ENCODE measurements at regions of chr1 and their contacts with region 1.

Region 1: GRCh38 chr1:39189592-39190041 is 14.9 kb upstream of the MACF1 start:
- DNase-seq: peak; percentile 68
- H3K4me3 ChIP-seq: no peak overlapping the region
- H3K27me3 ChIP-seq: no peaks in the 10 kb centered on the region
- CTCF ChIP-seq: no peak

Region 2: DNA sequence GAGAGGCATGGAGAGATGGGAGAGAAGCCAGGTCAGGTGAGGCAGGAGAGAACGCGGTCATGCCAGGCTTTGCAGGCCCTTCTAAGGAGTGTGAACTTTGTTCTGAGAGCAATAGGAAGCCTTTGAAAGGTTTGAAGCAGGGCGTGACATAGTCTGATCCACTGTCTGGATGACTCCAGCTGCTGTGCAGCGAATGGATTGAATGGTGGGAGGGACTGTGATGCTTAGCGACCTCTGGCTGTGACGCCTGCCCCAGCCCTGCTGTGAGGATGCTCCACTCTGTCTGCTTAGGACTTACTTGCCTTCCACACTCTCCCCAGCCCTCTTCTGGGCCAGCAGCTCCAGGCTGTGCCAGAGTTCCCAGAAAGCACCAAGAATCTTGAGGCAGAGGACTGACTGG is 1101.3 kb before region 1 on chr1:
- CTCF ChIA-PET with region 1: no interaction called
- POLR2A ChIA-PET with region 1: no interaction called
- DNase-seq: no peak
- H3K4me3 ChIP-seq: no peak overlapping the region
- H3K27me3 ChIP-seq: peaks cover 1% of the 10 kb centered on the region
- CTCF ChIP-seq: no peak

Region 3: GRCh38 chr1:39026051-39026865 is 163.4 kb before region 1 on chr1 and contains the start of gene NDUFS5:
- CTCF ChIA-PET with region 1: no interaction called
- POLR2A ChIA-PET with region 1: no interaction called
- DNase-seq: peak; percentile 60
- H3K4me3 ChIP-seq: peak within 1 kb of the TSS; percentile 59
- H3K27me3 ChIP-seq: no peaks in the 10 kb centered on the region
- CTCF ChIP-seq: no peak
- polyA plus RNA-seq, gene NDUFS5: 223 and 632 TPM in 2 replicates

Region 4: GRCh38 chr1:39127513-39127912 is 62.1 kb before region 1 on chr1:
- CTCF ChIA-PET with region 1: interaction called, 24 read pairs
- POLR2A ChIA-PET with region 1: no interaction called
- DNase-seq: no peak
- H3K4me3 ChIP-seq: no peak overlapping the region
- H3K27me3 ChIP-seq: no peaks in the 10 kb centered on the region
- CTCF ChIP-seq: no peak

Region 5: DNA sequence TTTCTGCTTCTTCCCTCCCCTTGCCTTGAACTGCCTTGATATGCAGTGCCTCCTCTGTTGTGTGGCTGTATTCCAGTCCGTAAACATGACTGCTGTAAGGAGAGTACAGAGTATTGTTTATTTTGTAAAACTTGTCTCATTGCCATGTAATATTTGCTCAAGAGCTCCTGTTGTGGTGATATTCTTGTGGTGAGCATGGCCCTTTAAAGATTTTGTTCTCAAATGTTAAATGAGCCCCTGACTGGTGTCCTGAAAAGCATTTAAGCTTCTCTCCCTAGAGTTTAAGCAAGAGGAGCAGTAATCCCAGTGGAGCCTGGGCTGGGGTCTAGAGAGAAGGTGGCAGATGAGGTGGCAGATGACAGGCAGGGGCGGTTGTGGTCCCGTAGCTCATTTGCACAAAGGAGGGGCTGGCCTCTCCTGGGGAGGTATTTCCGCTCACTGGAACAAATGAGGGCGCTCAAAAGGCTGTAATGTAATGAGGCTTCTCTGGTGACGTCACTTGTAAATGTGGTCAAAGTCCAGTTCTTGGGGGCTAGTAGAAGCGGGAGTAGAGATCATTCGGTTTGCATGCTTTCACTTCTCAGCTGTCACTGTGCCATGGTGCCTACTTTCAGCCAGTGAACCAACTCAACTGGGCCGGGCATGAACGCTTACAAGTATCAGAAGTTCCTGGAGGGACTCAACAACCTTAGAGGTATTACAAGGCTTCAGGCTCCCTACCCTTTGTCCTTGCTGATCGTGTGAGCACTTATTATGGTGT is 31.1 kb before region 1 on chr1:
- CTCF ChIA-PET with region 1: interaction called, 23 read pairs
- POLR2A ChIA-PET with region 1: no interaction called
- DNase-seq: no peak
- H3K4me3 ChIP-seq: no peak overlapping the region
- H3K27me3 ChIP-seq: no peaks in the 10 kb centered on the region
- CTCF ChIP-seq: no peak

Region 6: DNA sequence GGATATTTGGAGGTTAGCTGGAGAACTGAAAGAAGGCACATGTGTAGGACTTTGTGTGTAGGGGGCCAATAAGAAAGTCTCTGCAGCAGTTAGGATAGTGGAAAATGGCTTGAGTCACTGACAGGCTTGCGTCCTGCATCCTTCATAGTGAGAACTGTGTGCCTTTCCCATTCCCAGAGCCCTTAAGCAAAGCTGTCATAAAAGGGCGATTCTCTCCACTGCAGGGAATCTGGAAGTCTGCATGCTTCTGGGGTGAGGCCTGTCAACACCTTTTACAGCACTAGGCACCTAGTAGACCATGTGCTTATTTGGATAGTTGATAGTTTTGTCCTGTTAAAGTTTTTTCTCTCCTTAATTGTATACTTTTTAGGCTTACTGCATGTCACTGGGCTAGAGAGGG is 24.6 kb before region 1 on chr1:
- CTCF ChIA-PET with region 1: interaction called, 23 read pairs
- POLR2A ChIA-PET with region 1: interaction called, 5 read pairs
- DNase-seq: no peak
- H3K4me3 ChIP-seq: no peak overlapping the region
- H3K27me3 ChIP-seq: no peaks in the 10 kb centered on the region
- CTCF ChIP-seq: no peak

Region 7: GRCh38 chr1:39204441-39205081 is 14.9 kb after region 1 on chr1 and contains the start of gene MACF1:
- CTCF ChIA-PET with region 1: interaction called, 23 read pairs
- POLR2A ChIA-PET with region 1: interaction called, 3 read pairs
- DNase-seq: peak; percentile 77
- H3K4me3 ChIP-seq: peak within 1 kb of the TSS; percentile 40
- H3K27me3 ChIP-seq: no peaks in the 10 kb centered on the region
- CTCF ChIP-seq: peak; percentile 62
- polyA plus RNA-seq, gene MACF1: 57.3 and 82.2 TPM in 2 replicates

Region 8: DNA sequence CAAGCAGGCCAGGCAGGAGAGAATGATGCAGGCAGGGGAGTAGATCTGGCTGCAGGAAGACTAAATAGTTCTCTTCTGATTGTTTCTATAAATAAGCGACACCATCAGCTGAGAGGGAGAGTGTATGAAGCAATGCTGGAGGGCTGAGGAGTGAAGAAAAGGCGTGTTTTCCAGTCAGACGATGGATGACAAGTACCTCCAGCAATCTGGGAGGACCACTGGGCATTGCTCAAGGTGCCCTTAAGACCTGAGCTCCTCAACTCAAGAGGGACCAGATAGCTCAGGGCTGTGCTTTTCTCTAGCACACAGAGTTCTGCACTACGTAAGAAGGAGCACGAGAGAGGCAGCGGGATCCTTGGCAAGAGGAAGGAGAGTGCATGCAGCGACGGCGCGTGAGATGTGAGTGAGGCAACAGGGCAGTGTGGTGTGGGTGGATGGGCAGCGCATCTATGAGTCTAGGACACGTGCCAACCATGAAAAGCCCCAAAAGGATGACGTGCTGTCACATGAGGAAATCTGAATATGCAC is 351.0 kb after region 1 on chr1:
- CTCF ChIA-PET with region 1: no interaction called
- POLR2A ChIA-PET with region 1: no interaction called
- DNase-seq: no peak
- H3K4me3 ChIP-seq: no peak overlapping the region
- H3K27me3 ChIP-seq: no peaks in the 10 kb centered on the region
- CTCF ChIP-seq: no peak

Measured in BJ (cell line).